MCF 10A (cell line): ENCODE measurements at regions of chr14 and their contacts with region 1.

Region 1: GRCh38 chr14:22822571-22823098 is 7.1 kb upstream of the MRPL52 start:
- DNase-seq: peak; percentile 85
- H3K4me3 Mint-ChIP-seq: peak overlapping the region; percentile 29
- H3K27ac Mint-ChIP-seq: no peak overlapping the region
- H3K4me1 Mint-ChIP-seq: peaks cover 18% of the 10 kb centered on the region
- H3K27me3 Mint-ChIP-seq: no peaks in the 10 kb centered on the region
- CTCF ChIP-seq: peak; percentile 86

Region 2: GRCh38 chr14:22531451-22532344 is 290.9 kb before region 1 on chr14:
- CTCF ChIA-PET with region 1: no interaction called
- POLR2A ChIA-PET with region 1: no interaction called
- intact Hi-C with region 1: no loop called
- DNase-seq: no peak
- H3K4me3 Mint-ChIP-seq: no peak overlapping the region
- H3K27ac Mint-ChIP-seq: no peak overlapping the region
- H3K4me1 Mint-ChIP-seq: peaks cover 13% of the 10 kb centered on the region
- H3K27me3 Mint-ChIP-seq: no peaks in the 10 kb centered on the region
- CTCF ChIP-seq: no peak

Region 3: GRCh38 chr14:22658946-22659345 is 163.7 kb before region 1 on chr14:
- CTCF ChIA-PET with region 1: interaction called, 12 read pairs
- POLR2A ChIA-PET with region 1: no interaction called
- intact Hi-C with region 1: loop called (anchors 10 kb)
- DNase-seq: no peak
- H3K4me3 Mint-ChIP-seq: no peak overlapping the region
- H3K27ac Mint-ChIP-seq: no peak overlapping the region
- H3K4me1 Mint-ChIP-seq: no peaks in the 10 kb centered on the region
- H3K27me3 Mint-ChIP-seq: no peaks in the 10 kb centered on the region
- CTCF ChIP-seq: no peak

Region 4: GRCh38 chr14:22781586-22781991 is 41.0 kb before region 1 on chr14:
- CTCF ChIA-PET with region 1: interaction called, 4 read pairs
- POLR2A ChIA-PET with region 1: interaction called, 5 read pairs
- intact Hi-C with region 1: loop called (anchors 1 kb)
- DNase-seq: no peak
- H3K4me3 Mint-ChIP-seq: no peak overlapping the region
- H3K27ac Mint-ChIP-seq: no peak overlapping the region
- H3K4me1 Mint-ChIP-seq: no peaks in the 10 kb centered on the region
- H3K27me3 Mint-ChIP-seq: no peaks in the 10 kb centered on the region
- CTCF ChIP-seq: no peak

Region 5: GRCh38 chr14:22865424-22866405 is 43.1 kb after region 1 on chr14:
- CTCF ChIA-PET with region 1: interaction called, 8 read pairs
- POLR2A ChIA-PET with region 1: interaction called, 4 read pairs
- intact Hi-C with region 1: loop called (anchors 5 kb)
- DNase-seq: no peak
- H3K4me3 Mint-ChIP-seq: no peak overlapping the region
- H3K27ac Mint-ChIP-seq: no peak overlapping the region
- H3K4me1 Mint-ChIP-seq: peaks cover under 1% of the 10 kb centered on the region
- H3K27me3 Mint-ChIP-seq: no peaks in the 10 kb centered on the region
- CTCF ChIP-seq: no peak

Region 6: DNA sequence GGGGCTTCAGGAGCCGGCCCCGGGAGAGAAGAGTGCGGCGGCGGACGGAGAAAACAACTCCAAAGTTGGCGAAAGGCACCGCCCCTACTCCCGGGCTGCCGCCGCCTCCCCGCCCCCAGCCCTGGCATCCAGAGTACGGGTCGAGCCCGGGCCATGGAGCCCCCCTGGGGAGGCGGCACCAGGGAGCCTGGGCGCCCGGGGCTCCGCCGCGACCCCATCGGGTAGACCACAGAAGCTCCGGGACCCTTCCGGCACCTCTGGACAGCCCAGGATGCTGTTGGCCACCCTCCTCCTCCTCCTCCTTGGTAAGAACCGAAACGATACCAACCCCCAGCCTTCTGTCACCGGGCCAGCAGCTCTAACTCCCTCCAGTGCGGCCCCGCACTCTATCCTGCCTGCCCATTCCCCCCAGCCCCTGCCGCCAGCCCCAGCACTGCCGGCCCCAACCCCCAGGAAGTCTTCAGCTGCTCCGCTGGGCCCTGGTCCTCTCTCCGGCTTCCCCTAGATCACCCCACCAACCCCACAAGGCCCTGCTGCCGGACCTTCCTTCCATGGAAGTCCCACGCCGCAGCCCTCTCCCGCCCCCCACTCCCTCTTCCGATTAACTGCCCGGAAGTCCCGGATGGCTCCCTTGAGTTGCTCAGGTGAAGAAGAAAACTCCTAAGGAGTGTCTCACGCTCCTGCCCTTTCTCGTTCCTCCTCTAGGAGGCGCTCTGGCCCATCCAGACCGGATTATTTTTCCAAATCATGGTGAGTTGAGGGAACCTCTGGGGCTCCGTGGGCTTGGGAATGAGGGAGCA is 49.6 kb after region 1 on chr14:
- CTCF ChIA-PET with region 1: interaction called, 10 read pairs
- POLR2A ChIA-PET with region 1: interaction called, 4 read pairs
- intact Hi-C with region 1: loop called (anchors 5 kb)
- DNase-seq: peak; percentile 90
- H3K4me3 Mint-ChIP-seq: peak overlapping the region; percentile 79
- H3K27ac Mint-ChIP-seq: peak overlapping the region; percentile 91
- H3K4me1 Mint-ChIP-seq: peaks cover 20% of the 10 kb centered on the region
- H3K27me3 Mint-ChIP-seq: no peaks in the 10 kb centered on the region
- CTCF ChIP-seq: peak; percentile 81